KBM-7 (cell line): ENCODE measurements at regions of chr2 and their contacts with region 1.

Region 1: DNA sequence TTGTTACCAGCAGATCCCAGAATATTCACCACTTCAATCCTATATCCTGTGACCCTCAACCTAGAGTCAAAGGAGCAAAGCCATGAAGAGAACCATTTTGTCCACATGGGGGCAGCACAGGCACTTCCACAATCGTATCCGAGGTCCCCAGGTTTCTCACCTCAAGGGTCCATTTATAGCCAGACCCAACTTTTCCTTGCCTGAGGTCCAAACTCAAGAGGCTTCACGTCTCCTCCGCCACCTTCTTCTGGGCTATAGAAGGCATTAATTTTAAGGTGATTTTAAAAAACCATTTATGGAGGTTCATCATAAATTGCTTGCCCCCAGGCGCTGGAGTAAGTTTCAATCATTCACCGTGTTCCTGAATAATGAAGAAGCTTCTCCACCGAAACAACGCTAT is 111.6 kb upstream of the NABP1 start:
- DNase-seq: peak; percentile 83

Region 2: DNA sequence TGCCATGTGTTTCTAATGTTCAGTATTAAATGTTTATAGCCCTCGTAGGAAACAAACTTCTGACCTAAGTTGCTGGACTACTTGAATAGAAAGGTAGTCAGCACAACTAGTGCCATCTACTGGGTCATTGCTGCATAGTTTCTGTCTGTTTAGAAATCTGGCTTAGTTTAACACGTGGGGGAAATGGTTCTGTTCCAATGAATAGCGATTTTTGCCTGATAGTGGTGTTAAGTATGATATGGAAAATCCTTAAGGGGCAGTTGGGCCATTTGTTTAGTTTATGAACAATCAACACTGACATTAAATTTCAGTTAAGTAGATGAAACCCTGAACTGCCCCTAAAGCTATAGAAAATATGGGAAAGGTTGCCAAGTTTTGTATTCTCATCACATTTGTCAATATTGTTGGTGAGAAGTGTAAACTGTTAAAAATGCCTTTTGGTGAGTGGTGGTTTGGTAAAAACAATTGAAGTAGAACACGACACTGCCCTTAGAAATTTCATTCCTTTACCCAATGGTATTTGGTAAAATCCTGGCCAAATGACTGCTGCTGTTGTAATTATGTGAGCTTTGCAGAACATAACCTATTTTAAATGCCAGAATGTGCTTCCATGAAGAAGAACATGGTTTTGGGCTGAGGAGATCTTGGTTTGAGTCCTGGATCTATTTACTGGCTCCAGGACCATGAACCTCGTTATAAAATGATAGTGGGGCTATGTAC is 124.8 kb after region 1 on chr2:
- in situ Hi-C with region 1: loop called (anchors 10 kb)
- DNase-seq: peak; percentile 87

Region 3: GRCh38 chr2:191894681-191895147 is 328.4 kb after region 1 on chr2:
- in situ Hi-C with region 1: no loop called
- DNase-seq: no peak